HepG2 (cell line): ENCODE measurements at regions of chr12 and their contacts with region 1.

Region 1: DNA sequence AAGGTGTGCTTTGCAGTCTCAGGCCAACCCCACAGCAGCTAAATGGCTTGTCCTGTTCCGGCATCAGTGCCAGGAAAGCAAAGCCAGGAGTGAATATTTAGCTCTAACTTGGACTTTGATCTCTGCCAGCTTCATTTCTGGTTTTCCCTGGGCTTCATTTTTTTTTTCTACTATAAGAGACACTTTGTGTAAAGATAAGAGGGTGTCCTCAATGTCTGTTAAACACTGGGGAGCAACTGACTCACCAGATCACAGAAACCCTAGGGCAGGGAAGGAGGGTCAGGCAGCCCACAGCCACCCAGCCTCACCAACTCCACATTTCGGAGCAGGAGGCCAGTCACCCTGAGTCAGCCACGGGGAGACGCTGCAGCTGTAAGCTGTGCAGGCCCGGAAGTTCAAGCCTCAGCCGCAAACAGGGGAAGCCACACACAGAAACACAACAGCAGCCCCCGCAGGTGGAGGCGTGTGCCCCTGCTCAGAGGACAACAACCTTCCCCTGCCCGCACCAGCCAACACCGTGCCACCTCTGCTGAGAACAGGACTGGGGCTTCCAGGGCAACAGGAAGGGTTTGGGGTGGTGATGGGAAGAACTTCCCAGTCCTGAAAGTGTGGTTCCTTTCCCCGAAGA is 6.3 kb downstream of the TNFRSF1A start:
- DNase-seq: peak; percentile 90
- ATAC-seq: peak; percentile 74
- H3K4me3 ChIP-seq: peak overlapping the region; percentile 29 to 99 (median 41); a peak in 5 of 6 replicates
- H3K27ac ChIP-seq: peak overlapping the region; percentile 97
- H3K4me1 ChIP-seq: peaks cover 62% of the 10 kb centered on the region
- H3K27me3 ChIP-seq: no peaks in the 10 kb centered on the region; a peak in 1 of 5 replicates
- CTCF ChIP-seq: peak; percentile 92
- EP300 ChIP-seq: peak in 1 of 2 experiments; percentile 5; a peak in 1 of 4 replicates
- POLR2A ChIP-seq: no peak; a peak in 2 of 4 replicates
- RAD21 ChIP-seq: peak; percentile 84

Region 2: DNA sequence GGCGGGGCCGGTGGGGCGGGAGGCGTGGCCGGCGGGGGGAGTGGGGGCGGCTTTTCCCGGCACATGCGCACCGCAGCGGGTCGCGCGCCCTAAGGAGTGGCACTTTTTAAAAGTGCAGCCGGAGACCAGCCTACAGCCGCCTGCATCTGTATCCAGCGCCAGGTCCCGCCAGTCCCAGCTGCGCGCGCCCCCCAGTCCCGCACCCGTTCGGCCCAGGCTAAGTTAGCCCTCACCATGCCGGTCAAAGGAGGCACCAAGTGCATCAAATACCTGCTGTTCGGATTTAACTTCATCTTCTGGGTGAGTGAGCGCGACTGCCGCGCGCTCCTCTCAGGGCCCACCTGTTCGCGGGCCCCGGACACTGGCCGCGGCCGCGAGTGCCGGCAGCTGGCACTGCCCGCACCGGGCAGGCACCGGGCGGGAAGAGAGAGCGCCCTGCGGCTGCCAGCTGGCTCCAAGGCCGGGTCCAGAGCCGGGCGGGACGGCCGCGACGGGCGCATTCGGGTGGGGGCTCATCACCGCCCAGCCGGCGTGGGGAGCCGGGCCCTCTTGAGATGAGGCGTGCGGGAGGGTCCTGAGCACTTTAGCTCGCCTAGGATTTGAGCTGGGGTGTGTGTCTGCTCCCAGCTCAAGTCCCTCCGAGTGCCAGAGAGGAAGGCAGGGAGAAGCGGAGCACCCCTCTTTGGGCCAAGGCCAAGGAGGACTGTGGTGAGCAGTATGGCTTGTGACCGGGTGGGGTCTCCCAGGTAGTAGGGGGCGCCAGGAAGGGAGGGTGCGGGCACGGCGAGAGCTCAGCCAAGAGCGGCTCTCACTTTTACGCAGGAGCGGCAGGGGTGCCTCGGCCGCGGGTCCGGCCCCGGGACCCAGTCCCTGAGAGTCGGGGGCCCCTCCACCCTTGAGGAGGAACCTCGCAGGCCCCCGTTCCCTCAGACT is 135.0 kb before region 1 on chr12 and contains the start of gene CD9:
- CTCF ChIA-PET with region 1: no interaction called
- POLR2A ChIA-PET with region 1: no interaction called
- in situ Hi-C with region 1: no loop called
- intact Hi-C with region 1: no loop called
- DNase-seq: no peak
- ATAC-seq: no peak; the same call in 2 of the 3 replicates
- H3K4me3 ChIP-seq: peak within 1 kb of the TSS; percentile 33 to 71 (median 57); a peak in 4 of 6 replicates
- H3K27ac ChIP-seq: no peak within 1 kb of the TSS
- H3K4me1 ChIP-seq: peaks cover 69% of the 10 kb centered on the region
- H3K27me3 ChIP-seq: peaks cover 9 to 48% of the 10 kb centered on the region in 2 experiments
- CTCF ChIP-seq: no peak
- EP300 ChIP-seq: no peak
- POLR2A ChIP-seq: no peak
- RAD21 ChIP-seq: no peak
- total RNA-seq, gene CD9: 4.3 and 5.8 TPM in 2 replicates

Region 3: DNA sequence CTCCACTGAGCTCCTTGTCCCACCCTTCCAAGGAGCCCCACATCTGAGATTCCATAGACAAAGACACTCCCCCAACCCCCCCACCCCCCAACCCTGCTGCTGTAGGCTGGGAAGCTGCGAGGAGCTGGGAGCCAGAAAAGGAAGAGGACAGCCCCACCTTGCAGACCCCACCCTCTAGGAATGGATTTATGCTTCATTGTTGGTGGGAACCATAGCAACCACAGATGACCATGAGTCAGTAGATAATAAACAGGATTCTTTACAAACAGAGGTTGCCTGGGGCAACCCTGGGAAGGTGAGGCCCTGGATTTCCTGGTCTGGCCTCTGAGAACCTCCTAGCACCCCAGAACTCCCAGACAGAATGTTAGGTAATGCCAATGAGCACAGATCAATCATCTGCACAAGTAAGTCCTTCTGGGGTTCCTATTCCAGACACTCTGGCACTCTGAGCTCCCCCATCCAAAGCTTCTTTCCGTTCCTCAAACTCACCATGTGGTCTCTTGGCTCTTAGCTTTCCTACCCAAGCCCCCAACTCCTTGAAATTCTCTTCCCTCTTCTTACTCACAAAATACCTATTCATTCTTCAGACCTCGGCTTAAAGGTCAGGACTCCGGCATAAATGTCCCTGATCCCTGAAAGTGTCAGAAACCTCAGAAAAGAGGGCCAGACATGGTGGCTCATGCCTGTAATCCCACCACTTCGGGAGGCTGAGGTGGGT is 40.3 kb before region 1 on chr12:
- CTCF ChIA-PET with region 1: no interaction called
- POLR2A ChIA-PET with region 1: interaction called, 14 read pairs
- in situ Hi-C with region 1: no loop called
- intact Hi-C with region 1: no loop called
- DNase-seq: peak; percentile 98
- ATAC-seq: peak; percentile 91
- H3K4me3 ChIP-seq: peak overlapping the region; percentile 5 to 51 (median 33); a peak in 4 of 6 replicates
- H3K27ac ChIP-seq: peak overlapping the region; percentile 100
- H3K4me1 ChIP-seq: peaks cover 75% of the 10 kb centered on the region
- H3K27me3 ChIP-seq: no peaks in the 10 kb centered on the region
- CTCF ChIP-seq: no peak
- EP300 ChIP-seq: peak; percentile 81 to 94
- POLR2A ChIP-seq: peak; percentile 19 to 79; a peak in 3 of 4 replicates
- RAD21 ChIP-seq: no peak

Region 4: GRCh38 chr12:6347367-6348337 is 12.1 kb after region 1 on chr12:
- CTCF ChIA-PET with region 1: no interaction called
- POLR2A ChIA-PET with region 1: interaction called, 74 read pairs
- in situ Hi-C with region 1: no loop called
- intact Hi-C with region 1: no loop called
- DNase-seq: no peak
- ATAC-seq: no peak
- H3K4me3 ChIP-seq: no peak overlapping the region
- H3K27ac ChIP-seq: no peak overlapping the region
- H3K4me1 ChIP-seq: peaks cover 57% of the 10 kb centered on the region
- H3K27me3 ChIP-seq: no peaks in the 10 kb centered on the region
- CTCF ChIP-seq: no peak
- EP300 ChIP-seq: no peak
- POLR2A ChIP-seq: no peak
- RAD21 ChIP-seq: no peak

Region 5: DNA sequence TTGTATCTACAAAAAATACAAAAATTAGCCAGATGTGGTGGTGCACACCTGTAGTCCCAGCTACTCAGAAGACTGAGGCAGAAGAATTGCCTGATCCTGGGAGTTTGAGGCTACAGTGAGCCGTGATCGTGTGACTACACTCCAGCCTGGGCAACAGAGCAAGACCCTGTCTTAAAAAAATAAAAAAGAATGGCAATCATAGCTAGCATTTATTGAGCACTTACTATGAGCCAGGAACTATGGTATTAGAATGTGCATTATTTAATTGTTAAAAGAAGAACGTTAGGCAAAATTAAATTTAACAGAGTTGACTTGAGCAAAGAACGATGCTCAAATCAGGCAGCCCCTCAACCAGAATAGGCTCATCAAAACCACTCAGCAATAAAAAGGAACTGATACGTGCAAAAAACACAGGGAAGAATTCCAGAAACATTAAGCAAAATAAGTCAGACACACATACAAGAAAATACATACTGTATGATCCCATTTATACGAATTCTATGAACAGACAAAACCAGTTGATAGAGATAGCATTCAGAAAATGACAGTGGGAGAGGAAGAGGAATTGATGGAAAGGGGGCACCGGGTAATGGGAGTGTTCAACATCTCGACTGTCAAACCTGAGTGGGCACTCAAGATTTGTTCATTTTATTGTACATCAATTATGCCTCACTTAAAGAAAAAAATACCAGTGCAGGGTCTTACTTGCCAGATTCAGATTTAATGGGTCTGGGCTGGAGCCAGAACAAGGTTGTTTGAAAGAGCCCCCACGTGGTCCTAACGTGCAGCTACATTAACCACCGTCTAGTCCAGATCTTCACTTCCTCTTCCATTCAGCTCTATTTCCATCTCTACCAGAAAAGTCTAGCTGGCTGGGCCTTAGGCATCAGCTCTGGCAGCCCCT is 31.8 kb after region 1 on chr12:
- CTCF ChIA-PET with region 1: interaction called, 4 read pairs
- POLR2A ChIA-PET with region 1: interaction called, 278 read pairs
- in situ Hi-C with region 1: loop called (anchors 5 kb)
- intact Hi-C with region 1: no loop called
- DNase-seq: peak; percentile 56
- ATAC-seq: no peak
- H3K4me3 ChIP-seq: no peak overlapping the region
- H3K27ac ChIP-seq: peak overlapping the region; percentile 44
- H3K4me1 ChIP-seq: peaks cover 61% of the 10 kb centered on the region
- H3K27me3 ChIP-seq: no peaks in the 10 kb centered on the region
- CTCF ChIP-seq: peak; percentile 69
- EP300 ChIP-seq: no peak
- POLR2A ChIP-seq: no peak
- RAD21 ChIP-seq: peak; percentile 44; the same call in 1 of the 2 replicates

Region 6: GRCh38 chr12:6423267-6424007 is 87.9 kb after region 1 on chr12:
- CTCF ChIA-PET with region 1: no interaction called
- POLR2A ChIA-PET with region 1: interaction called, 4 read pairs
- in situ Hi-C with region 1: no loop called
- intact Hi-C with region 1: loop called (anchors 5 kb)
- DNase-seq: peak; percentile 81
- ATAC-seq: peak; percentile 92
- H3K4me3 ChIP-seq: peak overlapping the region in 1 of 3 experiments; percentile 12; a peak in 1 of 6 replicates
- H3K27ac ChIP-seq: no peak overlapping the region
- H3K4me1 ChIP-seq: peaks cover 63% of the 10 kb centered on the region
- H3K27me3 ChIP-seq: peaks cover 2 to 12% of the 10 kb centered on the region in 2 experiments; a peak in 2 of 5 replicates
- CTCF ChIP-seq: peak; percentile 95
- EP300 ChIP-seq: no peak
- POLR2A ChIP-seq: no peak
- RAD21 ChIP-seq: peak; percentile 84

Region 7: GRCh38 chr12:6493497-6494257 is 158.1 kb after region 1 on chr12 and contains the start of gene NCAPD2:
- CTCF ChIA-PET with region 1: no interaction called
- POLR2A ChIA-PET with region 1: interaction called, 10 read pairs
- in situ Hi-C with region 1: no loop called
- intact Hi-C with region 1: no loop called
- DNase-seq: peak; percentile 94
- ATAC-seq: peak; percentile 94
- H3K4me3 ChIP-seq: peak within 1 kb of the TSS; percentile 80 to 83 (median 81)
- H3K27ac ChIP-seq: peak within 1 kb of the TSS; percentile 98
- H3K4me1 ChIP-seq: peaks cover 38% of the 10 kb centered on the region
- H3K27me3 ChIP-seq: no peaks in the 10 kb centered on the region; a peak in 1 of 5 replicates
- CTCF ChIP-seq: no peak; the same call in 1 of the 2 replicates
- EP300 ChIP-seq: no peak
- POLR2A ChIP-seq: peak; percentile 5 to 68; a peak in 3 of 4 replicates
- RAD21 ChIP-seq: no peak
- total RNA-seq, gene NCAPD2: 65.6 and 100 TPM in 2 replicates